Caco-2 (cell line): ENCODE measurements at regions of chr7 and their contacts with region 1.

Region 1: GRCh38 chr7:32275216-32275979 is 205.2 kb upstream of the PDE1C start:
- DNase-seq: no peak
- H3K4me3 ChIP-seq: no peak overlapping the region
- H3K4me3 Mint-ChIP-seq: no peak overlapping the region
- H3K27ac Mint-ChIP-seq: no peak overlapping the region
- H3K4me1 ChIP-seq: no peaks in the 10 kb centered on the region
- H3K4me1 Mint-ChIP-seq: no peaks in the 10 kb centered on the region
- H3K27me3 ChIP-seq: no peaks in the 10 kb centered on the region
- H3K27me3 Mint-ChIP-seq: peaks cover 19% of the 10 kb centered on the region
- CTCF ChIP-seq: no peak

Region 2: DNA sequence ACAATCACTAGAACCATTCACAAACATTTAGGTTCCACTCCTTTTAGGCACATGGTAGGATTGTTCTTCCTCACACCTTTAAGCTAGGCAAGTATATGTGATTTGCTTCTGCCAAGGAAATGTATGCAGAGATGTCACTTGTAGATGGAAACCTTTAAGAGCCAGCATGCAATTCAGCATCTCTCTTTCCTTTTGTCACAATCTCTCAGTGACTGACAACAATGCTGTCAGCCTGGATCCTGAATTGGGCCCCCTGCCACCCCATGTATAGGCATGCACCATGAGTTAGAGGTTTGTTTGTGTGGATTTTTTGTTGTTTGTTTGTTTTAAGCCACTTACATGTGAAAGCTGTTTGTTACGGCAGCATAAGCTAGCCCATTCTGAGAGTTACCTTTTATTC is 35.6 kb before region 1 on chr7:
- CTCF ChIA-PET with region 1: no interaction called
- POLR2A ChIA-PET with region 1: no interaction called
- intact Hi-C with region 1: no loop called
- DNase-seq: no peak
- H3K4me3 ChIP-seq: no peak overlapping the region
- H3K4me3 Mint-ChIP-seq: no peak overlapping the region
- H3K27ac Mint-ChIP-seq: no peak overlapping the region
- H3K4me1 ChIP-seq: no peaks in the 10 kb centered on the region
- H3K4me1 Mint-ChIP-seq: no peaks in the 10 kb centered on the region
- H3K27me3 ChIP-seq: no peaks in the 10 kb centered on the region
- H3K27me3 Mint-ChIP-seq: no peaks in the 10 kb centered on the region
- CTCF ChIP-seq: no peak

Region 3: DNA sequence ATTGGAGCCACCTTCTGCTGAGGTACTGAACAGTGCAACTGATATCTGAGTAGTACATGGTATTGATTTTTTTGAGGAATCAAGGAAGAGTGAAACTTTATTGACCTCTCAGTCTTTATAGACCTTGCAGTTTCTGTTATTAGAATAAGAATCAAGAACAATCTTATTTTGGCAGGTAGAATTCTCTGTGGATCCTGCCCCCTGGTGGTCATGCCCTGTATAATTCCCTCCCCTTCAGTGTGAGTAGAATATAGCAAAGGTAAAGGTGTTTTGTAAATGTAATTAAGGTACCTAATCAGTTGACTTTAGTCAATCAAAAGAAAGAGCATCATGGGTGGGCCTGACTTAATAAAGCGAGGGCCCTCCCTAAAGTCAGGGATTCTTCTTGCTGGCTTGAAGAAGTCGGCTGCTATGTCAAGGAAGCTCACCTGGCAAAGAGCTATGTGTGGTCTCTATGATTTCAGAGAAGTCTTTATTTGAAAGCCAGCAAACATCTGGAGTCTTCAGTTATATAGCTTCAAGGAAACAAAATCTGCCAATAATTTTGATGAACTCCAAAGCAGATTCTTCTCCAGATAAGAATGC is 71.9 kb after region 1 on chr7:
- CTCF ChIA-PET with region 1: no interaction called
- POLR2A ChIA-PET with region 1: no interaction called
- intact Hi-C with region 1: loop called (anchors 10 kb)
- DNase-seq: peak in 1 of 2 experiments; percentile 43
- H3K4me3 ChIP-seq: no peak overlapping the region
- H3K4me3 Mint-ChIP-seq: no peak overlapping the region
- H3K27ac Mint-ChIP-seq: no peak overlapping the region
- H3K4me1 ChIP-seq: no peaks in the 10 kb centered on the region
- H3K4me1 Mint-ChIP-seq: no peaks in the 10 kb centered on the region
- H3K27me3 ChIP-seq: no peaks in the 10 kb centered on the region
- H3K27me3 Mint-ChIP-seq: peaks cover 8% of the 10 kb centered on the region
- CTCF ChIP-seq: peak; percentile 68 to 82